Astrocyte of the cerebellum (primary cell): ENCODE measurements at regions of chr11 and their contacts with region 1.

Region 1: GRCh38 chr11:2077061-2077802 is 62.0 kb downstream of the IGF2 start:
- DNase-seq: no peak
- H3K4me3 ChIP-seq: no peak overlapping the region
- CTCF ChIP-seq: no peak

Region 2: GRCh38 chr11:1619449-1619848 is 457.8 kb before region 1 on chr11:
- in situ Hi-C with region 1: no loop called
- DNase-seq: no peak
- H3K4me3 ChIP-seq: no peak overlapping the region
- CTCF ChIP-seq: no peak

Region 3: GRCh38 chr11:1970956-1971355 is 106.3 kb before region 1 on chr11:
- in situ Hi-C with region 1: no loop called
- DNase-seq: no peak
- H3K4me3 ChIP-seq: no peak overlapping the region
- CTCF ChIP-seq: no peak

Region 4: GRCh38 chr11:2151500-2152257 is 74.4 kb after region 1 on chr11:
- in situ Hi-C with region 1: loop called (anchors 5 kb)
- DNase-seq: peak; percentile 53
- H3K4me3 ChIP-seq: no peak overlapping the region
- CTCF ChIP-seq: peak; percentile 77

Region 5: GRCh38 chr11:2298795-2299761 is 221.8 kb after region 1 on chr11:
- in situ Hi-C with region 1: no loop called
- DNase-seq: no peak
- H3K4me3 ChIP-seq: no peak overlapping the region
- CTCF ChIP-seq: peak; percentile 25